ENCODE measurements at regions of chr2 and their contacts with region 1.

Region 1: GRCh38 chr2:219229305-219230058 is at the starts of genes ANKZF1 and ATG9A:
- DNase-seq: peak; percentile 90 to 99 (median 98)
- ATAC-seq: peak; percentile 95 to 96
- H3K4me3 Mint-ChIP-seq: peak within 1 kb of the TSS; percentile 97 to 99 (median 99)
- H3K27ac Mint-ChIP-seq: peak within 1 kb of the TSS; percentile 96 to 100 (median 98)
- H3K4me1 Mint-ChIP-seq: peaks cover 29 to 78% (median 63%) of the 10 kb centered on the region in 4 donors
- H3K27me3 Mint-ChIP-seq: no peaks in the 10 kb centered on the region
- polyA plus RNA-seq, gene ANKZF1: 23.8 to 46.2 (median 25.9) TPM
- polyA plus RNA-seq, gene ATG9A: 17.7 to 27.9 (median 20.5) TPM

Region 2: GRCh38 chr2:219125225-219125885 is 104.1 kb before region 1 on chr2:
- POLR2A ChIA-PET with region 1: no interaction called
- DNase-seq: no peak
- ATAC-seq: no peak
- H3K4me3 Mint-ChIP-seq: peak overlapping the region in 1 of 10 donors; percentile 23
- H3K27ac Mint-ChIP-seq: peak overlapping the region in 5 of 10 donors; percentile 31 to 63 (median 40)
- H3K4me1 Mint-ChIP-seq: peaks cover 22 to 43% (median 23%) of the 10 kb centered on the region in 4 donors
- H3K27me3 Mint-ChIP-seq: no peaks in the 10 kb centered on the region

Region 3: GRCh38 chr2:219160186-219161017 is 69.1 kb before region 1 on chr2 and contains the start of gene NHEJ1:
- POLR2A ChIA-PET with region 1: interaction called, 13 read pairs
- DNase-seq: peak; percentile 83 to 100 (median 90)
- ATAC-seq: peak; percentile 86 to 90
- H3K4me3 Mint-ChIP-seq: peak within 1 kb of the TSS; percentile 86 to 99 (median 93)
- H3K27ac Mint-ChIP-seq: peak within 1 kb of the TSS; percentile 88 to 99 (median 97)
- H3K4me1 Mint-ChIP-seq: peaks cover 16 to 35% (median 17%) of the 10 kb centered on the region in 4 donors
- H3K27me3 Mint-ChIP-seq: no peaks in the 10 kb centered on the region
- polyA plus RNA-seq, gene NHEJ1: 16.6 to 29.1 (median 23.0) TPM

Region 4: DNA sequence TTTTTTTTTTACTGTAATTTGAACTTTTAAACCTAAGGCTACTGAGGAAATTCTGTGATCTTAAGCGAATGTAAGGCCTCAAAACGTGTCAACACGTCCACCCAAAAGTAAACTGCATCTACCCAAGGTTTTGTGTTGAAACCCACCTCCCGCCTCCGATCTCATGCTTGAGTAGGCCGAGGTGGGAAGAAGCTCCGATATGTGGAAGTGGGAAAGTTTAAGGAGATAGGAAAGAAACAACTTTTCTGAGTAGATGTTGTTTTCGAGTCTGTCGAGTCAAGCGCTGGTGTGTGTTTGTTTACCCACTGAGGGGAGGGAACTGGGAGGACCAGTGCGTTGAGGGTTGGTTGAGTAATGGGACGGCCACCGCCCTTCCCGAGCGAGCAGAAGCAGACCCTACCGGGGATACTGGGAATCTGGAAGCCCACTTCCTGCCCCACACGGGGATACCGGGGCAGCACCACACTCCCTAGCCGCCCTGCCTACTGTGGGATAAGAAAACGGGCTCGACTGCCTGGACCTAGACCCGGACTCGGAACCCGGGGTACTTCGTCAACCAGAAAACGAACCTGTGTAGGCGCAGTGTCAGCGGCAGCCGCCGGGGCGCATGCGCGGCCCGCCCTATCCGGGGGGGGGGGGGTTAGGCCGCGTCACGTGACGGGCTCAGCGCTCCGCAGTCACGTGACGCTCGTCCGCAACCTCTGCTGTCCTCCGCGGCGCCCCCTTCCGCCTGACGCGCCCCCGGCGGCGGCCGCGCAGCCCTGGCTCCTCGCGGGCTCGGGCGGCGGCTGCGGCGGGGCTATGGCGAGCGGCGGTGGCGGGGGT is 51.7 kb before region 1 on chr2 and contains the start of gene RETREG2:
- POLR2A ChIA-PET with region 1: interaction called, 39 read pairs
- DNase-seq: peak; percentile 69 to 91 (median 81)
- ATAC-seq: peak; percentile 51 to 55
- H3K4me3 Mint-ChIP-seq: peak within 1 kb of the TSS; percentile 90 to 98 (median 97)
- H3K27ac Mint-ChIP-seq: peak within 1 kb of the TSS; percentile 96 to 99 (median 98)
- H3K4me1 Mint-ChIP-seq: peaks cover 45 to 77% (median 75%) of the 10 kb centered on the region in 4 donors
- H3K27me3 Mint-ChIP-seq: no peaks in the 10 kb centered on the region
- polyA plus RNA-seq, gene RETREG2: 52.0 to 64.3 (median 57.6) TPM

Region 5: DNA sequence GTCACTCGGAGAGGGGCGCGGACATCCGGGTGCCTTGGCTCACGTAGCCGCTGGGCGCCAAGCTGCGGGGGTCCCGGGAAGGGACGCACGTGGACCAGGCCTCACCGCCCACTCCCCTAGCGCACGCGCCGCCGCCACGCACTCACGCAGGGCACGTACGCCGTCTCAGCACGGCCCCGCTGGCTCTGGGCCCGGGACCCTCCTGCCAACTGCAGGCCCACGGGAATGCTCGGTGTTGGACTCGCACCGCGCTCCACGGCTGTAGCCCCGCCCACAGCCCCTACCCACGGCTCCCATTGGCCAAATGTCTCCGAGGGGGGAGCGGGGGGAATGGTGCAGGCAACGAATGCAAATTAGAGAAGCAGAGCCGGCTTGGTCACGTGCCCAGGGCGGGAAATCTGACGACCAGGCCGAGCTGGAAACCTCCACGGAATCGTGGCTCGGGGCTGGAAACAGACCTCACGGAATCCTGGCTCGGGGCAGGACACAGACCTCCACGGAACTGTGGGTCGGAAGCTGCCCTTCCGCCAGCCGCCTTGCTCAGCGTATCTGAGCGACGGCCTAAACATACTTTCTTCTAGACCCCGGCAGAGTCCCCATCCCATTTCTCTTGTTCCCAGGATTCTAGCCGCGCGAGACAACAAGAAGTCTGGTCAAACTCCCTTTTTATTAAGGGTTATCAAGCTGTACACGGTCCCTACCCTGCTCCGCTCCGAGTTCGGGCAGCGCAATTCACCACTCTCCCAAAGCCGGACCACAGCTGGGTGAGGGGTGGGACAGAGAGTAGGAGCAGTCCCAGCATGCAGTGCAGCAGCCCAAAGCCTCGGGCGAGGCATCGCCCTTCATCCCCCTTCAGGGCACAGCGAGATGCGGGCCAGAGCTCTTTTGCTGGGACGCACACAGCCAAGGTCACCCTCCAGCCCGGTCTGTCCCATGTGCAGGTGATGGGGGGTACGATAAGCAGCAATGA is 10.5 kb before region 1 on chr2 and contains the start of gene ABCB6:
- POLR2A ChIA-PET with region 1: interaction called, 50 read pairs
- DNase-seq: peak; percentile 74 to 94 (median 84)
- ATAC-seq: peak; percentile 92
- H3K4me3 Mint-ChIP-seq: peak within 1 kb of the TSS; percentile 75 to 91 (median 82)
- H3K27ac Mint-ChIP-seq: peak within 1 kb of the TSS; percentile 17 to 89 (median 82)
- H3K4me1 Mint-ChIP-seq: peaks cover 17 to 31% (median 26%) of the 10 kb centered on the region in 4 donors
- H3K27me3 Mint-ChIP-seq: no peaks in the 10 kb centered on the region
- polyA plus RNA-seq, gene ABCB6: 1.6 to 4.9 (median 1.8) TPM

Region 6: GRCh38 chr2:219245148-219245898 is 15.8 kb after region 1 on chr2 and contains the starts of genes GLB1L and STK16:
- POLR2A ChIA-PET with region 1: interaction called, 591 read pairs
- DNase-seq: peak; percentile 70 to 92 (median 85)
- ATAC-seq: peak; percentile 61 to 62
- H3K4me3 Mint-ChIP-seq: peak within 1 kb of the TSS; percentile 84 to 100 (median 96)
- H3K27ac Mint-ChIP-seq: peak within 1 kb of the TSS; percentile 94 to 99 (median 98)
- H3K4me1 Mint-ChIP-seq: peaks cover 19 to 70% (median 69%) of the 10 kb centered on the region in 4 donors
- H3K27me3 Mint-ChIP-seq: no peaks in the 10 kb centered on the region
- polyA plus RNA-seq, gene GLB1L: 0.62 to 1.8 (median 1.7) TPM
- polyA plus RNA-seq, gene STK16: 21.6 to 25.8 (median 23.7) TPM

Region 7: DNA sequence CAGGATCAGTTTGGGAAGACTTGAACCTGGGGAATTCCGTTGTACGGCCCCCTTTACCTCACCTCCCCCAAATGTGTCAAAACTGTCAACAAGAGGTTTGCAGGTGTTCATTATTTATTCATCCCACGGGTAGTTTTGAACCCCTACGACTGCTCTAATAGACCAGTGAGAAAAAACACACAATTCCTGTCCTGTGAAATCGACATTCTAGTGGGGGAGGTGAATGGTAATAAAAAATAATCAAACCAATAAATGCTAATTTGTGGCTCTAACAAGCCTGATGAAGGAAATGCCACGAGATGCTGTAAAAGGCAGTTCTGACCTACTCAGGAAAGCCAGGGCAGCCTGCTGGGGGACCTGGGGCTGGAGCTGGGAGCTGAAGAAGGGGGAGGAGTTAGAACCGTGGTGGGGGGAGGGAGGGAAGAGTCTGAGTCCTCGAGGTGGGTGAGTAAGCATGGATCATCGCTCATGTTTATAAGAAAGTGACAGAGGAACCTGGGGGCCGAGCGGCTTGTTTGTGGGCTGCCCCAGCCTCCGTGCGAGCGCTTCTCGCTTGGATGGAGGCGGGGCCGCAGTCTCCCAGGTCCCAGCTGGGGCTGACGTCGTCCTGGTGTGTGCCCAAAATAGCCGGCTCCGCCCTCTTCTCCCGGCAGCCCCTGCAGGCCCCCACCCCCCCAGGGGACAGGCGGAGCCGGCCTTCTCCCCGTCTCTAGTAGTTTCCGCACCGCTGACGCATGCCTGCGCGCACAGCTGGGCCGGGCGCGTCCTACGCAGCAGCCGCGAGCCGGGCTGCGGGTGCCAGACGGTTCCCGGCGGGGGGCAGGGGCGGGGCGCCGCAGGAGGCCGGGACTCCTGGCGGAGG is 49.4 kb after region 1 on chr2 and contains the start of gene DNAJB2:
- POLR2A ChIA-PET with region 1: interaction called, 34 read pairs
- DNase-seq: peak; percentile 92 to 99 (median 98)
- ATAC-seq: peak; percentile 81 to 87
- H3K4me3 Mint-ChIP-seq: peak within 1 kb of the TSS; percentile 89 to 99 (median 98)
- H3K27ac Mint-ChIP-seq: peak within 1 kb of the TSS; percentile 98 to 100 (median 100)
- H3K4me1 Mint-ChIP-seq: peaks cover 21 to 54% (median 50%) of the 10 kb centered on the region in 4 donors
- H3K27me3 Mint-ChIP-seq: peaks cover 0 to 2% (median 0%) of the 10 kb centered on the region in 5 donors
- polyA plus RNA-seq, gene DNAJB2: 5.0 to 6.6 (median 5.9) TPM

Region 8: GRCh38 chr2:219294356-219295351 is 65.2 kb after region 1 on chr2:
- POLR2A ChIA-PET with region 1: interaction called, 21 read pairs
- DNase-seq: peak; percentile 79 to 92 (median 90)
- ATAC-seq: peak; percentile 89 to 92
- H3K4me3 Mint-ChIP-seq: peak overlapping the region; percentile 62 to 82 (median 76)
- H3K27ac Mint-ChIP-seq: peak overlapping the region in 9 of 10 donors; percentile 32 to 93 (median 81)
- H3K4me1 Mint-ChIP-seq: peaks cover 13 to 44% (median 37%) of the 10 kb centered on the region in 4 donors
- H3K27me3 Mint-ChIP-seq: peaks cover 0 to 3% (median 0%) of the 10 kb centered on the region in 5 donors

Measured in naive thymus-derived CD8-positive, alpha-beta T cell (primary cell).